Naive thymus-derived CD8-positive, alpha-beta T cell (primary cell): ENCODE measurements at regions of chr20 and their contacts with region 1.

Region 1: GRCh38 chr20:3820048-3820900 is at the start of gene AP5S1:
- DNase-seq: peak; percentile 81 to 99 (median 88)
- ATAC-seq: peak; percentile 84
- H3K4me3 Mint-ChIP-seq: peak within 1 kb of the TSS; percentile 82 to 95 (median 90)
- H3K27ac Mint-ChIP-seq: peak within 1 kb of the TSS; percentile 91 to 99 (median 98)
- H3K4me1 Mint-ChIP-seq: peaks cover 20 to 55% (median 55%) of the 10 kb centered on the region in 4 donors
- H3K27me3 Mint-ChIP-seq: no peaks in the 10 kb centered on the region
- polyA plus RNA-seq, gene AP5S1: 10.1 to 21.8 (median 19.3) TPM

Region 2: DNA sequence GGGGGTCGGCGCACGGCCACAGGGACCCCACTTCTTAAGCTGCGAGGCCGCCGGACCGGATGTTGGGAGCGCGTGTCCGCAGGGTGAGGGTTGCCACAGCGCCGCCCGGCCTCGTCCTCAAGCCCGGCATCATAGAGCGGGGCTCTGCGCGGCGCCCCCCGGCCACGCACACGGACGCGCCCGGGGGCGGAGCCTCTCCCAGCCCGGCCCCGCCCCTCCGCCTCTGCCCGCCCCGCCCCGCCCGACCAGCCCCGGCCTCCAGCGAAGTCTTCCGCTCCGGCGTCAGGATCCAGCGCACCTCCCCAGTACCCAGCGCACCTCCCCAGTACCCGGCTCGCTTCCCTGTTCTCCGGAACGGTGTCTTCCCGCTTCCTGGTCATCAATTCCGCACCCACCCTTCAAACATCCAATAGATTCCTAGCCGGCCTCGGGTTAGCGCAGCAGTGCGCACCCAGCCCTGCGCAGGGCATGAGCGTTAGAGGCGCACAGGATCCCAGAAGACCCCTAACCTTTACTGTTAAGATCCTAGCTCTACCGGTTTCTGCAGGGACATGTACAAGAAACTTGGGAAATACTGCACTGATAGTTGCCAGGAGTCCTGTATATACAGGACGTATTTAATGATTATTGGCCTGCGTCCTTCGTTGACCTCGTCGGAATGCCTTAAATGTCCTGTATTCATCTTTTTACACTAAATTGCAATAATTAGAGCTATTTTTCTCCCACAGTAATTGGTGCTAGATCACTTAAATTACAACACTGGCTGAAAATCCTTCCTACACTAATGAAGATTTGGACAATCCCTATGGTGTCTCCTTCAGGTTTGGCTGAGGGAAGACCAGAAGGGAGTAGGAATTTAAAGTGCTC is 412.3 kb before region 1 on chr20:
- POLR2A ChIA-PET with region 1: no interaction called
- DNase-seq: peak; percentile 44 to 82 (median 72)
- ATAC-seq: peak; percentile 59 to 62
- H3K4me3 Mint-ChIP-seq: peak overlapping the region; percentile 96 to 100 (median 98)
- H3K27ac Mint-ChIP-seq: peak overlapping the region; percentile 85 to 98 (median 97)
- H3K4me1 Mint-ChIP-seq: peaks cover 13 to 36% (median 32%) of the 10 kb centered on the region in 4 donors
- H3K27me3 Mint-ChIP-seq: no peaks in the 10 kb centered on the region

Region 3: GRCh38 chr20:3846378-3846739 is 26.1 kb after region 1 on chr20:
- POLR2A ChIA-PET with region 1: interaction called, 12 read pairs
- DNase-seq: peak in 3 of 10 donors; percentile 2 to 62 (median 18)
- ATAC-seq: no peak
- H3K4me3 Mint-ChIP-seq: peak overlapping the region; percentile 82 to 95 (median 90)
- H3K27ac Mint-ChIP-seq: peak overlapping the region; percentile 81 to 95 (median 92)
- H3K4me1 Mint-ChIP-seq: peaks cover 15 to 42% (median 33%) of the 10 kb centered on the region in 4 donors
- H3K27me3 Mint-ChIP-seq: no peaks in the 10 kb centered on the region